ENCODE measurements at regions of chr11 and their contacts with region 1.

Region 1: GRCh38 chr11:12224537-12224893 is 114.1 kb downstream of the MICAL2 start:
- DNase-seq: peak; percentile 77 to 83 (median 79)
- H3K4me3 ChIP-seq: no peak overlapping the region
- H3K4me3 Mint-ChIP-seq: no peak overlapping the region
- H3K27ac ChIP-seq: peak overlapping the region; percentile 28 to 73
- H3K27ac Mint-ChIP-seq: peak overlapping the region; percentile 78 to 93 (median 90)
- H3K4me1 ChIP-seq: peaks cover 35 to 49% of the 10 kb centered on the region in 2 donors
- H3K4me1 Mint-ChIP-seq: peaks cover 48% of the 10 kb centered on the region
- H3K27me3 ChIP-seq: no peaks in the 10 kb centered on the region
- H3K27me3 Mint-ChIP-seq: no peaks in the 10 kb centered on the region
- CTCF ChIP-seq: no peak

Region 2: GRCh38 chr11:11735586-11735985 is 488.9 kb before region 1 on chr11:
- intact Hi-C with region 1: no loop called
- DNase-seq: no peak
- H3K4me3 ChIP-seq: no peak overlapping the region
- H3K4me3 Mint-ChIP-seq: no peak overlapping the region
- H3K27ac ChIP-seq: no peak overlapping the region
- H3K27ac Mint-ChIP-seq: no peak overlapping the region
- H3K4me1 ChIP-seq: no peaks in the 10 kb centered on the region
- H3K4me1 Mint-ChIP-seq: no peaks in the 10 kb centered on the region
- H3K27me3 ChIP-seq: no peaks in the 10 kb centered on the region
- H3K27me3 Mint-ChIP-seq: peaks cover 1 to 9% (median 6%) of the 10 kb centered on the region in 3 donors
- CTCF ChIP-seq: no peak

Region 3: DNA sequence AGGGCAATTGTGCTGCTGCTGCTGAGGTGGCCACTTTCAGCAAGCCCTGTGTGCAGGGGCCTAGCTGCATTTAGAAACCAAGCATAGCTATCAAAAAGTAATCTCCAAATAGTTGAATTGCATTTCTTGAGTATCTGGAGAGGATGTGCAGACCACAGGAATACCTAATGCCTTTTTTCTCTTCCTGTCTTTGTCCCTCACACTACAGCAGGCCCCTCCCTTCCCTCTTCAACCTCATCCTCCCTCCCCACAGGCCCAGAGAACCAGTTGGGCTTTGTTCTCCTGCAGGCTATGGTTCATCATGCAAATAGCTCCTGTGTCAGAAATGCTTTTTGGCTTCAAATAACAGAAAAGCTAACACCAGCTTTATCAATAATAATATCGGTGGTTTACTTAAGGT is 263.8 kb before region 1 on chr11:
- intact Hi-C with region 1: no loop called
- DNase-seq: no peak
- H3K4me3 ChIP-seq: no peak overlapping the region
- H3K4me3 Mint-ChIP-seq: no peak overlapping the region
- H3K27ac ChIP-seq: no peak overlapping the region
- H3K27ac Mint-ChIP-seq: peak overlapping the region in 1 of 7 donors; percentile 63
- H3K4me1 ChIP-seq: no peaks in the 10 kb centered on the region
- H3K4me1 Mint-ChIP-seq: peaks cover 2% of the 10 kb centered on the region
- H3K27me3 ChIP-seq: no peaks in the 10 kb centered on the region
- H3K27me3 Mint-ChIP-seq: peaks cover 3 to 7% (median 6%) of the 10 kb centered on the region in 3 donors
- CTCF ChIP-seq: no peak

Region 4: DNA sequence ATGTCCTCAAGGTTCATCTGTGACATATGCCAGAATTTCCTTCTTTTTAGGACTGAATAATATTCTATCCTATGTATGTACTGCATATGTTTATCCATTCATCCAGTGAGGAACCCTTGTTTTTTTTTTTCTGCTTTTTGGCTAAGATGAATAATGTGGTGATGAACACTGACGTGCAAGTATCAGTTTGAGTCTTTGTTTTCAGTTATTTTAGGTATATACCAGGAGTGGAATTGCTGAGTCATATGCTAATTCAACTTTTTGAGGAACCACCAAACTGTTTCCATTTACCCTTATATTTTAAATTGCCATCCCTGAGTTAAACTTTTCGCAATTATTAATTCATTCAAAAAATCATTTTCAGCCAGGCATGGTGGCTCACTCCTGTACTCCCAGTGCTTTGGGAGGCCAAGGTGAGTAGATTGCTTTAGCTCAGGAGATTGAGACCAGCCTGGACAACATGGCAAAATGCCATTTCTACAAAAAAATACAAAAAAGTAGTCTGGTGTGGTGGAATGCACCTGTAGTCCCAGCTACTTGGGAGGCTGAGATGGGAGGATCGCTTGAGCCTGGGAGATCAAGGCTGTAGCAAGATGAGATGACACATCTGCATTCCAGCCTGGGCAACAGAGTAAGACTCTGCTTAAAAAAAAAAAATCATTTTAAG is 49.9 kb before region 1 on chr11:
- intact Hi-C with region 1: loop called in 1 of 2 experiments (anchors 10 kb)
- DNase-seq: peak; percentile 62 to 89 (median 78)
- H3K4me3 ChIP-seq: peak overlapping the region in 1 of 3 experiments; percentile 0
- H3K4me3 Mint-ChIP-seq: peak overlapping the region in 1 of 2 donors; percentile 35
- H3K27ac ChIP-seq: peak overlapping the region; percentile 19 to 77
- H3K27ac Mint-ChIP-seq: peak overlapping the region; percentile 81 to 93 (median 89)
- H3K4me1 ChIP-seq: peaks cover 28 to 37% of the 10 kb centered on the region in 2 donors
- H3K4me1 Mint-ChIP-seq: peaks cover 51% of the 10 kb centered on the region
- H3K27me3 ChIP-seq: no peaks in the 10 kb centered on the region
- H3K27me3 Mint-ChIP-seq: no peaks in the 10 kb centered on the region
- CTCF ChIP-seq: no peak